WTC11 (cell line): ENCODE measurements at regions of chr22 and their contacts with region 1.

Region 1: DNA sequence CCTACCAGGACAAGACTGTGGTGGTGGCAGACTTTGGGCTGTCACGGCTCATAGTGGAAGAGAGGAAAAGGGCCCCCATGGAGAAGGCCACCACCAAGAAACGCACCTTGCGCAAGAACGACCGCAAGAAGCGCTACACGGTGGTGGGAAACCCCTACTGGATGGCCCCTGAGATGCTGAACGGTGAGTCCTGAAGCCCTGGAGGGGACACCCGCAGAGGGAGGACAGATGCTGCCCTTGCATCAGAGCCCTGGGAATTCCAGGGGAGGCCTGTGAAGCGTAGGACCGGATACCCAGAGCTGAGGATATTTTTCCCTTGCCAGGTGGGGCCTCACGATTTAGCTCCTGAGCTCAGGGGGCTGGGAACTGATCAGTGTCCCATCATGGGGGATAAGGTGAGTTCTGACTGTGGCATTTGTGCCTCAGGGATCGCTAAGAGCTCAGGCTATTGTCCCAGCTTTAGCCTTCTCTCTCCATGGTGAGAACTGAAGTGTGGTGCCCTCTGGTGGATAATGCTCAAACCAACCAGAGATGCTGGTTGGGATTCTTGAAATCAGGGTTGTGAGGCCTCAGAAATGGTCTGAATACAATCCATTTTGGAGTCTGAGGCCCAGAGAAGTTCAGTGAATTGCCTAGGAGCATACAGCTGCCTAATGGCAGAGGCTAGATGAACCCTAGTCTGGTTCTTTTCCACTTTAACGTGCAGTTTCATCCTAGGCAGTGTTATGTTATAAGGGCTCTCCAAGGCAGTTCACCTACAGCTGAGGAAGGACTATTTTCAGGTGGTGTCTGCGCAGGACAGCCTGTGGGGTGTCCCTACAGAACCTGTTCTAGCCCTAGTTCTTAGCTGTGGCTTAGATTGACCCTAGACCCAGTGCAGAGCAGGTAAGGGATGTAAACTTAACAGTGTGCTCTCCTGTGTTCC is 19.5 kb downstream of the PIK3IP1 start:
- DNase-seq: peak; percentile 67
- ATAC-seq: peak; percentile 60
- H3K4me3 Mint-ChIP-seq: no peak overlapping the region
- H3K27ac Mint-ChIP-seq: peak overlapping the region; percentile 89
- H3K4me1 Mint-ChIP-seq: peaks cover 20% of the 10 kb centered on the region
- H3K27me3 Mint-ChIP-seq: no peaks in the 10 kb centered on the region
- CTCF ChIP-seq: peak; percentile 55

Region 2: DNA sequence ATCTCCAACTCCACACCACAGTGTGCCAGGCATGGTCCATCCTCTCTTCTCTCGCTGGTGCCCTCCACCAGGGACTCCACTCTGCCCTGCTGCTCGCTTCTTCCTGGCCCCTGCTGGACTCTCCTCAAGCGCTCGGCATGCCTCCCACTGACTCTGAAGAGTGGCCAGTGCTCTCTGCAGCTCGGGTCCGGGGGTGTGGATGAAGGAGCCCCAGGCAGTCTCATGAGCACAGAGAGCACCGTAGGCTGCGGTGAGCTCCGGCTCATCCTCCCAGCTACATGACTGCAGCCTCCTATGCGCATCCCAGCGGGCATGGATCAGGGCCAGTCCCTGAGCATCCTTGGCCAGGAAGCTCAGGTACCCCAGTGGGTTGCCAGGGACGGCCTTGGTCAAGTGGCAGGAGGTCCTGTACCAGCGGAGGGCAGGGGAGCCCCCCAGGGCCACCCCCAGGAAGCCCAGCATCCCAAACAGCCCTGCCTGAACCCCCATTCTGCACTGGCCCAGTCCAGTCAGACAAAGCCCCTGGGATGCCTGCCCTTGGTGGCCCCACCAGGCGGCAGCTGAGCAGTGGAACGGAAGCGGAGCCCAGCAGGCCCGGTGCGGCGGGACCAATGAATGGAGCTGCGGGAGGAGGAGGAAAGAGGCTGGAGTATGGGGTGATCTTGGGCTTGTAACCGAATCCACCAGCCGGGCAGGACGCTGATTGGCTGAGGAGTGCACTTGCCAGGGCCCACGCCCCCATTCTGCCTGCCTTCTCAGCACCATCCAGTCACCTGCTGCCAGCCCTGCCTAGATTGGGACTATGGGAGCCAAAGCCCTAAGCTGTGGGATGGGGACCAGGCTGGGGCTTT is 132.7 kb before region 1 on chr22 and contains the start of gene PLA2G3:
- CTCF ChIA-PET with region 1: interaction called, 10 read pairs
- POLR2A ChIA-PET with region 1: no interaction called
- DNase-seq: peak; percentile 94
- ATAC-seq: peak; percentile 98
- H3K4me3 Mint-ChIP-seq: peak within 1 kb of the TSS; percentile 86
- H3K27ac Mint-ChIP-seq: peak within 1 kb of the TSS; percentile 82
- H3K4me1 Mint-ChIP-seq: peaks cover 22% of the 10 kb centered on the region
- H3K27me3 Mint-ChIP-seq: peaks cover 9% of the 10 kb centered on the region
- CTCF ChIP-seq: no peak
- total RNA-seq, gene PLA2G3: 14.7 to 18.3 TPM (median 15.1 TPM) in 3 replicates

Region 3: DNA sequence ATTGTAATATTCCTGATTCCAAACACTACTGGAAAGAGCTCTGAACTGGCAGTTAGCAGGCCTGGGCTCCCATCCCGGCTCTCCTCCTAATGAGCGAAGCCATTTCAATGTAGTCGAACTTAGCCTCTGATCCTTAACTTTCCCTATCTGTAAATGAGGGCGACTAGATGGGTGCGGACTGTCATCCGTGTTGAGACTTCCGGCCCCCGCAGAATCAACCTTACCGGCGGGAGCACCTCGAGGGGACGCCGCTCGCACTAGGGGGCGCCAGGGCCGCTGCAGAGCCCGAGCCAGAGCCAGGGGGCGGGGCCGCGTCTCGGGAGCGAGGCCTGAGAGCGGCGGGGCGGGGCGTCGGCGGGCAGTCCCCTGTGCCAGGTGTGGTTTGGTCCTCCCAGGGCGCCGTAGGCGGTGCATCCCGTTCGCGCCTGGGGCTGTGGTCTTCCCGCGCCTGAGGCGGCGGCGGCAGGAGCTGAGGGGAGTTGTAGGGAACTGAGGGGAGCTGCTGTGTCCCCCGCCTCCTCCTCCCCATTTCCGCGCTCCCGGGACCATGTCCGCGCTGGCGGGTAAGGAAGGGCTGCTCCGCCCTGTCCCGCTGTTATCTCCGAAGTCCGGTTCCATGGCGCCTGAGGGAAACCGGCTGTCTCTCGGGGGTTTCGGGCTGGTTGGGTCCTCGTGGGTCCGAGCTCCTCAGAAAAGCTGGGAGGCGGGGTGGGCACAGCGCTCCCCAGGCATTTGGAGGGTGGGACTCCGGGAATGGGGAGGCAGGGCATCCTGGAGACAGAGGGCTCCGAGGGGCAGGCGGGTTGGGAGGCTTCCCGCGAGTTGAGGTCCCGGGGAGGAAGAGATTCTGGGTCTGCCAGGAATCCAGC is 60.7 kb before region 1 on chr22 and contains the start of gene LIMK2:
- CTCF ChIA-PET with region 1: interaction called, 123 read pairs
- POLR2A ChIA-PET with region 1: no interaction called
- DNase-seq: peak; percentile 97
- ATAC-seq: peak; percentile 96
- H3K4me3 Mint-ChIP-seq: peak within 1 kb of the TSS; percentile 88
- H3K27ac Mint-ChIP-seq: no peak within 1 kb of the TSS
- H3K4me1 Mint-ChIP-seq: peaks cover 20% of the 10 kb centered on the region
- H3K27me3 Mint-ChIP-seq: no peaks in the 10 kb centered on the region
- CTCF ChIP-seq: peak; percentile 38; the same call in 1 of the 2 replicates
- total RNA-seq, gene LIMK2: 33.1 to 42.8 TPM (median 33.6 TPM) in 3 replicates

Region 4: GRCh38 chr22:31241936-31242335 is 30.8 kb before region 1 on chr22:
- CTCF ChIA-PET with region 1: interaction called, 53 read pairs
- POLR2A ChIA-PET with region 1: no interaction called
- DNase-seq: no peak
- ATAC-seq: no peak
- H3K4me3 Mint-ChIP-seq: no peak overlapping the region
- H3K27ac Mint-ChIP-seq: no peak overlapping the region
- H3K4me1 Mint-ChIP-seq: peaks cover 21% of the 10 kb centered on the region
- H3K27me3 Mint-ChIP-seq: no peaks in the 10 kb centered on the region
- CTCF ChIP-seq: no peak

Region 5: DNA sequence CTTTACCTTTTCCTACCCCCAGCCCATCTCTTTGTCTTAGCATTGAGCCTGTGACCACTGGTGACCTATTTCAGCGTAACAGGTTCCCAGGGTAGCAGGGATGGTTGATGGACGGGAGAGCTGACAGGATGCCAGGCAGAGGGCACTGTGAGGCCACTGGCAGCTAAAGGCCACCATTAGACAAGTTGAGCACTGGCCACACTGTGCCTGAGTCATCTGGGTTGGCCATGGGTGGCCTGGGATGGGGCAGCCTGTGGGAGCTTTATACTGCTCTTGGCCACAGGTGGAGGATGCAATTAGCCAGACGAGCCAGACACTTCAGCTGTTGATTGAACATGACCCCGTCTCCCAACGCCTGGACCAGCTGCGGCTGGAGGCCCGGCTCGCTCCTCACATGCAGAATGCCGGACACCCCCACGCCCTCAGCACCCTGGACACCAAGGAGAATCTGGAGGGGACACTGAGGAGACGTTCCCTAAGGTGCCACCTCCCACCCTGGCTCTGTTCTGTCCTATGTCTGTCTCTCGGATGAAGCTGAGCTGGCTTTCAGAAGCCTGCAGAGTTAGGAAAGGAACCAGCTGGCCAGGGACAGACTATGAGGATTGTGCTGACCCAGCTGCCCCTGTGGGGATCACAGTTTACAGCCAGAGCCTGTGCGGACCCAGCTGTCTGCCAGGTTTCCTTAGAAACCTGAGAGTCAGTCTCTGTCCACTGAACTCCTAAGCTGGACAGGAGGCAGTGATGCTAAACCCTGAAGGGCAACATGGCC is 10.3 kb before region 1 on chr22:
- CTCF ChIA-PET with region 1: interaction called, 21 read pairs
- POLR2A ChIA-PET with region 1: no interaction called
- DNase-seq: no peak
- ATAC-seq: no peak
- H3K4me3 Mint-ChIP-seq: no peak overlapping the region
- H3K27ac Mint-ChIP-seq: no peak overlapping the region
- H3K4me1 Mint-ChIP-seq: peaks cover 6% of the 10 kb centered on the region
- H3K27me3 Mint-ChIP-seq: no peaks in the 10 kb centered on the region
- CTCF ChIP-seq: no peak